GM18951 (cell line): ENCODE measurements at regions of chr10 and their contacts with region 1.

Region 1: GRCh38 chr10:48289501-48290238 is 15.2 kb upstream of the FRMPD2 start:
- POLR2A ChIP-seq: no peak

Region 2: DNA sequence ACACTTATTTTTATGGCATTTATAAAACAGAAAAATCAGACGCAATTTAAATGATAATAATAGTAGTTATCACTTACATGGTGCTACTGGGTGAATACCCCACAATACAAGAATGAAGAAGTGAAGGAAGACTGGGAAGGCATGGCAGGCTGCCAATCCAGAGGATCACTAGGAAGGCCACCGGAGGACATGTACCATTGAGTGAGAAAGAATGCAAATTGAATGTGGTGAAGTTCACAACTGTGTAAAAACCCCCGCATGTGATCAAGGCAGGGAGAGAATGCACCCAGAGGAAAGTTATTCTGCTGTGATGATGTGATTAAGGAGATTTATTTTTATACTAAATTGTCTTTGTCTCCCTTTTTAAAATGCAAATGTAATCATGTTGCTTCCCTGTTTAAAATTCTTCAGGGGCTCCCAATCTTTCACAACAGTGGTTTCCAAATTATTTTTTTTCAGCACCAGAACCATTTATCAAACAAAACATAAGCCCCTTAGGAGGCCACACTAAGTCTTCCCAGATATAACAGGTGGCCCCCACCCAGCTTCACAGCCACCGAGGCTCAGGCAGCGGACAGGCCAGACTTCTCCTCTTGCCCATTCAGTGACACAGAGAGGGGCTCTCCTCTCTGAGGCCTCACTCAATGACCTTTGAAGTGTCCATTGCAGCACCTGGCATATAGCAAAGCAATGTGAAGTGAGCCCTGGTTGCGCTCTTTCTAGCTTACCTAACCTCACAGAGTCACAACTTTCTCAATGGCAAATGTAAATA is 74.8 kb before region 1 on chr10:
- in situ Hi-C with region 1: loop called (anchors 5 kb)
- POLR2A ChIP-seq: no peak